Naive thymus-derived CD4-positive, alpha-beta T cell (primary cell): ENCODE measurements at regions of chr12 and their contacts with region 1.

Region 1: DNA sequence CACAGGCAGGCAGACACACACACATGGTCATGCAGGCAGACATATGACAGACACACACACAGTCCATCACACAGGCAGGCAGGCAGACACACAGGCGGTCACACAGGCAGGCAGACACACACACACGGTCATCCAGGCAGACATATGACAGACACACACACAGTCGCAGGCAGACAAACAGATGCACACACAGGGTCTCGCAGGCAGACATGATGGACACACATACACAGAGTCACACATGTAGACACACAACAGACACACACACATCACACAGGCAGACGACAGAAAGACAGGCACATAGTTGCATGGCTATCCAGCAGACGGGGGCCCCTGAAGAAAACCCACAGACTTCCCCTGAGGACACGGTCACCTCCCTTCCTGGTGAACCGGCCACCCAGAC is 135.4 kb downstream of the NCOR2 start:
- DNase-seq: no peak
- ATAC-seq: peak; percentile 9
- H3K4me3 ChIP-seq: no peak overlapping the region
- H3K4me3 Mint-ChIP-seq: no peak overlapping the region
- H3K27ac ChIP-seq: no peak overlapping the region
- H3K27ac Mint-ChIP-seq: peak overlapping the region in 6 of 9 donors; percentile 14 to 65 (median 60)
- H3K4me1 ChIP-seq: no peaks in the 10 kb centered on the region
- H3K4me1 Mint-ChIP-seq: peaks cover 0 to 17% (median 8%) of the 10 kb centered on the region in 7 donors
- H3K27me3 ChIP-seq: no peaks in the 10 kb centered on the region
- H3K27me3 Mint-ChIP-seq: no peaks in the 10 kb centered on the region

Region 2: DNA sequence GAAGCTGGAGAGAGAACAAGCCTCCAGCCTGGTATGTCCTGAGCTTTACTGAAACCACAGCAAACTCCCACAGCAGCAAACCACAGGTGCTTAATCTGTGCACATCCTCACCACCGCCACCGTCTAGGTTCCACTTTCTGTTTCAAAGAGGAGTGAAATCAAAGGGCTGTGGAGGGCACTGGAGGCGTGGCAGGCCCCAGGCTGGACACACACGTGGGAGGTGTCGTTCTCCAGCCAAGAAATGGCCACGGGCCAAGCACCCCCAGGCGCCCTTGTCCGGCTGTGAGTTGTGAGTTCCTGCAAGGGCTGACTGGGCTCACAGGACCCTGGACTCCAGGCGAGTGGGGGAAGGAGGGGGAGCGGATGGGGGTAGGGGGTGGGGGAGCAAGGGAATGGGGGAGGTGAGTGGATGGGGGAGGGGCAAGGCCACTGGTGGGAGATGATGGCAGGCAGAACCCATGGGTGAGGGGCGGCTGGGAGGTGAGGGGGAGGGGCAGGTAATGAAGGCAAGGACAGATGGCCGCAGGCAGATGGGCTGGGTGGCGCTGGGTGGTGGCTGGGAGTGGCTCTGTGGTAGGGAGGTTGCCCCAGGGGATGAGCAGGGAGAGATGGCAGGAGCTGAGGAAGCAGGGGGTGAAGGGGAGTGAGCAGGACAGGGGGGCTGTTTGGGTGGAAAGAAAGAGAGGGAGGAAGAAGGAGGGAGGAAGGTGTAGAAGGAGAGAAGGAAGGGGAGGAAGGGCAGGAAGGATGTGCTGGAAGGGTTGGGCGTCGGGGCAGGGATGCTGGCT is 48.7 kb after region 1 on chr12:
- CTCF ChIA-PET with region 1: no interaction called
- POLR2A ChIA-PET with region 1: no interaction called
- intact Hi-C with region 1: loop called in 1 of 2 experiments (anchors 2 kb)
- DNase-seq: peak in 1 of 9 donors; percentile 50
- ATAC-seq: peak; percentile 40
- H3K4me3 ChIP-seq: no peak overlapping the region
- H3K4me3 Mint-ChIP-seq: peak overlapping the region in 2 of 10 donors; percentile 33 to 45
- H3K27ac ChIP-seq: no peak overlapping the region
- H3K27ac Mint-ChIP-seq: peak overlapping the region in 5 of 9 donors; percentile 19 to 78 (median 43)
- H3K4me1 ChIP-seq: peaks cover 0 to 8% of the 10 kb centered on the region in 2 donors
- H3K4me1 Mint-ChIP-seq: peaks cover 15 to 37% (median 31%) of the 10 kb centered on the region in 7 donors
- H3K27me3 ChIP-seq: no peaks in the 10 kb centered on the region
- H3K27me3 Mint-ChIP-seq: no peaks in the 10 kb centered on the region

Region 3: DNA sequence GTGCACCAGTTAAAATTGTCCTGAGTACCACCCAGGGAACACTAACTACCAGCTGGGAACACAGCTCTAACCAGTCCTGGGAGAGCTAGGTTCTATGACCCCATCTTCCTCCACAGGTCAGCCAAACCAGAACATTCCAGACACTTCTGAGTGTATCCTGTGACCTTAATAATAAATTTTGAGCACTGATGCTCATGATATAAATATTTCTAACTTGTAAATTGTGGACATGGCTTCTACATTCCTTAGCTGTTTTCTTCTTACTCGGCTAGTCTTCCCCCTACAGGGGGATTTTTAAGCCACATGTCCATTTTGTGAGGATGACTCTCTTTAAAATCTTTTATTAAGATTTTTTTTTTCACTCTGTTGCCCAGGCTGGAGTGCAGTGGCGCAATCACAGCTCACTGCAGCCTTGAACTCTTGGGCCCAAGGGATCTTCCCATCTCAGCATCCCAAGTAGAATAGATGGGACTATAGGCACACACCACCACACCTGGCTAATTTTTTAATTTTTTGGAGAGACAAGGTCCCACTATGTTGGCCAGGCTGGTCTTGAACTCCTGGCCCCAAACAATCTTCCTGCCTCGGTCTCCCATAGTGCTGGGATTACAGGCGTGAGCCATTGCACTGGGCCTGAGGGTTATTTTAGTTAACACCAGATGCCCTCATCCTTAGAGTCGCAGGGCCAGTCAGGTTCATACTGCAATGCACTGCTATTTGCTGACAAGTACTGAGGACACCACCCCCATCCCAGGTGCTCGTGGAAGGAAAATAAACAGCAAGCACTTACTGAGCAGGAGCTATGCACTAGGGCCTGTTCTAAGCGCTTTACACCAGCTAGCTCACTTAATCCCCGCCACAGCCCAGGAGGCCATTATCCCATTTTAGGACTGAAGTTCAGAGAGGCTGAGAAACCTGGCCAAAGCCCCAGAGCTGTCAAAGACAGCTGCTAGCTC is 278.0 kb after region 1 on chr12:
- CTCF ChIA-PET with region 1: no interaction called
- POLR2A ChIA-PET with region 1: no interaction called
- intact Hi-C with region 1: no loop called
- DNase-seq: no peak
- ATAC-seq: no peak
- H3K4me3 ChIP-seq: no peak overlapping the region
- H3K4me3 Mint-ChIP-seq: no peak overlapping the region
- H3K27ac ChIP-seq: no peak overlapping the region
- H3K27ac Mint-ChIP-seq: peak overlapping the region in 1 of 9 donors; percentile 33
- H3K4me1 ChIP-seq: peaks cover 12 to 14% of the 10 kb centered on the region in 2 donors
- H3K4me1 Mint-ChIP-seq: peaks cover 13 to 21% (median 17%) of the 10 kb centered on the region in 7 donors
- H3K27me3 ChIP-seq: no peaks in the 10 kb centered on the region
- H3K27me3 Mint-ChIP-seq: peaks cover 0 to 8% (median 0%) of the 10 kb centered on the region in 5 donors